CD4-positive, alpha-beta T cell (primary cell): ENCODE measurements at regions of chr22 and their contacts with region 1.

Region 1: DNA sequence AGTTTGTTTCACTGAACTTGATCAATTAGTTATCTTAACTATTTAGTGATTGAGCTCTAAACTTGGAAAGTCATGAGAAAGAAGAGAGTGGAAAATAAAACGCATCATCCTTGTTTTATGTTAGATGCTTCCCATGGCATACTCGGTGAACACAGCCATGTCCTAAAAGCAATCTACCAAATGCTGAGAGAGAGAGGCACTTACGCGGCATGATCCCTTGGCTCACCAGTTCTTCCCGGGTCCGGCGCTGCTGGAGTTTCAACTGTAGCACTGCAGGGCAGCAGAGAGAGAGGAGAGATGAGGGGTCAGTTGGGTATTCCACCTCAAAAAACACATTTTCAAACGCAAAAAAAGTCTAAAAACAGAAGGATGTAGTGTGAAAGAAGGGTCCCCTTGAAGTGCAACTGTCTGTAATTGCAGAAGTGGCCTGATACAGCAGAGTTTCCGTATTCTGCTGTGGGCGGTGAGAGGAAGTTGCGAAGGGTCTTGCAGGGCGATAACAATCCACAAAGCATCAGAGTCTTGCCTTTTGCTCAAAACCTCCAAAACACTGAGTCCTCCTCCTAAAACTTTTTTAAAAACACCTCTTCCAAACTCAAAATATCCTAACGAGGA is 92.7 kb downstream of the SGSM3 start:
- DNase-seq: peak; percentile 10 to 73 (median 44)
- ATAC-seq: peak; percentile 81
- H3K4me3 ChIP-seq: peak overlapping the region; percentile 79
- H3K4me3 Mint-ChIP-seq: peak overlapping the region; percentile 96
- H3K27ac ChIP-seq: peak overlapping the region; percentile 76 to 78
- H3K27ac Mint-ChIP-seq: peak overlapping the region; percentile 98
- H3K4me1 ChIP-seq: peaks cover 49% of the 10 kb centered on the region
- H3K4me1 Mint-ChIP-seq: peaks cover 87% of the 10 kb centered on the region
- H3K27me3 ChIP-seq: no peaks in the 10 kb centered on the region
- H3K27me3 Mint-ChIP-seq: no peaks in the 10 kb centered on the region
- CTCF ChIP-seq: no peak

Region 2: GRCh38 chr22:39360674-39361413 is 1102.3 kb before region 1 on chr22:
- CTCF ChIA-PET with region 1: no interaction called
- POLR2A ChIA-PET with region 1: no interaction called
- intact Hi-C with region 1: no loop called
- DNase-seq: no peak
- ATAC-seq: no peak
- H3K4me3 ChIP-seq: no peak overlapping the region
- H3K4me3 Mint-ChIP-seq: no peak overlapping the region
- H3K27ac ChIP-seq: no peak overlapping the region
- H3K27ac Mint-ChIP-seq: no peak overlapping the region
- H3K4me1 ChIP-seq: no peaks in the 10 kb centered on the region
- H3K4me1 Mint-ChIP-seq: no peaks in the 10 kb centered on the region
- H3K27me3 ChIP-seq: no peaks in the 10 kb centered on the region
- H3K27me3 Mint-ChIP-seq: no peaks in the 10 kb centered on the region
- CTCF ChIP-seq: no peak

Region 3: DNA sequence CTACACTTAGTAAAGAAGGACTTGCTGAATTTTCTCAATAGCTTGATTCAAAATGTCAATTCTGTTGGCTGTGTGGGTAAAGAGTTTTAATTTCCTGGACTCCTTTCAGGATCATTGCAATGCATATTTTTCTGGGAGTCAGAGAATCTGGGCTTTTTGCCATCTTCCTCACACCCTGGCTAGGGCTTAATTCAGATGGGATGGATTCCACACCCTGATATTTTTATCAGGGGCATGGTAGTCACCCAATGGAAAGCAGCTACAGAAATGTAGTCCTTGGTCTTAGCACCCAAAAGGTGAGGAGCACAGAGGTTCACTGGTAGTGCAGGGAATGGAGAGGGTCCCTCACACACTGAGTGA is 13.5 kb before region 1 on chr22:
- CTCF ChIA-PET with region 1: interaction called, 4 read pairs
- POLR2A ChIA-PET with region 1: interaction called, 57 read pairs
- intact Hi-C with region 1: no loop called
- DNase-seq: no peak
- ATAC-seq: no peak
- H3K4me3 ChIP-seq: no peak overlapping the region
- H3K4me3 Mint-ChIP-seq: peak overlapping the region; percentile 63
- H3K27ac ChIP-seq: peak overlapping the region in 1 of 2 donors; percentile 33
- H3K27ac Mint-ChIP-seq: peak overlapping the region; percentile 83
- H3K4me1 ChIP-seq: peaks cover 61% of the 10 kb centered on the region
- H3K4me1 Mint-ChIP-seq: peaks cover 89% of the 10 kb centered on the region
- H3K27me3 ChIP-seq: no peaks in the 10 kb centered on the region
- H3K27me3 Mint-ChIP-seq: no peaks in the 10 kb centered on the region
- CTCF ChIP-seq: no peak

Region 4: DNA sequence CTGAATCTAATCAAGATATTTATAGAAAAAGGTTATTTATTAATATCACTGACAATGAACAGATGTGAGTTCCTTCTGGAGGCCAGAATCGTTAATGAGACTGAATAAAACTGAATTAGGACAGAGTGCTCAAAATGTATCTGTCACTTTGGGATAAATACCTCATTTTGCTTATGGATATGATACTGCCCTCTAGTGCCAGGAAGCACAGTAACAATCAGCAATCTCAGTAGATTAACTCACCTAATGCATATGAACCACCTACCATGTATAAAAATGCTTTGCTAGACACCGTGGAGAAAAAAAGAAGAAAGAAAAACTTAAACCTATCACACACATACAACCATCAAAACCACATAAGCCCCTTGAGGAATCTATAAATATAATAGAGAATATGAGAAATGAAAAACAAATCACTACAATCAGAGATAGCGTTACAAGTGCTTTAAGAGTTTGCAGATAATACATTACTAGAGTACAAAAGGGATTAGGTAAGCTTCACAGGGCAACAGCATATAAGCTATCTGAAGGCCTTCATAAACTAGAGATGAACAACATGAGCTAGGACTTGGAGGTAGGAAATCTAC is 24.6 kb after region 1 on chr22:
- CTCF ChIA-PET with region 1: interaction called, 3 read pairs
- POLR2A ChIA-PET with region 1: interaction called, 3 read pairs
- intact Hi-C with region 1: loop called in 1 of 2 experiments (anchors 2 kb)
- DNase-seq: peak in 3 of 14 experiments; percentile 51 to 68 (median 62)
- ATAC-seq: peak; percentile 53
- H3K4me3 ChIP-seq: no peak overlapping the region
- H3K4me3 Mint-ChIP-seq: no peak overlapping the region
- H3K27ac ChIP-seq: no peak overlapping the region
- H3K27ac Mint-ChIP-seq: peak overlapping the region; percentile 4
- H3K4me1 ChIP-seq: peaks cover 5% of the 10 kb centered on the region
- H3K4me1 Mint-ChIP-seq: peaks cover 52% of the 10 kb centered on the region
- H3K27me3 ChIP-seq: no peaks in the 10 kb centered on the region
- H3K27me3 Mint-ChIP-seq: no peaks in the 10 kb centered on the region
- CTCF ChIP-seq: peak; percentile 91

Region 5: GRCh38 chr22:40533712-40534378 is 70.7 kb after region 1 on chr22:
- CTCF ChIA-PET with region 1: no interaction called
- POLR2A ChIA-PET with region 1: interaction called, 10 read pairs
- intact Hi-C with region 1: no loop called
- DNase-seq: peak; percentile 21 to 90 (median 47)
- ATAC-seq: peak; percentile 98
- H3K4me3 ChIP-seq: peak overlapping the region; percentile 54
- H3K4me3 Mint-ChIP-seq: peak overlapping the region; percentile 84
- H3K27ac ChIP-seq: peak overlapping the region; percentile 44 to 49
- H3K27ac Mint-ChIP-seq: peak overlapping the region; percentile 88
- H3K4me1 ChIP-seq: peaks cover 31% of the 10 kb centered on the region
- H3K4me1 Mint-ChIP-seq: peaks cover 71% of the 10 kb centered on the region
- H3K27me3 ChIP-seq: no peaks in the 10 kb centered on the region
- H3K27me3 Mint-ChIP-seq: no peaks in the 10 kb centered on the region
- CTCF ChIP-seq: no peak

Region 6: DNA sequence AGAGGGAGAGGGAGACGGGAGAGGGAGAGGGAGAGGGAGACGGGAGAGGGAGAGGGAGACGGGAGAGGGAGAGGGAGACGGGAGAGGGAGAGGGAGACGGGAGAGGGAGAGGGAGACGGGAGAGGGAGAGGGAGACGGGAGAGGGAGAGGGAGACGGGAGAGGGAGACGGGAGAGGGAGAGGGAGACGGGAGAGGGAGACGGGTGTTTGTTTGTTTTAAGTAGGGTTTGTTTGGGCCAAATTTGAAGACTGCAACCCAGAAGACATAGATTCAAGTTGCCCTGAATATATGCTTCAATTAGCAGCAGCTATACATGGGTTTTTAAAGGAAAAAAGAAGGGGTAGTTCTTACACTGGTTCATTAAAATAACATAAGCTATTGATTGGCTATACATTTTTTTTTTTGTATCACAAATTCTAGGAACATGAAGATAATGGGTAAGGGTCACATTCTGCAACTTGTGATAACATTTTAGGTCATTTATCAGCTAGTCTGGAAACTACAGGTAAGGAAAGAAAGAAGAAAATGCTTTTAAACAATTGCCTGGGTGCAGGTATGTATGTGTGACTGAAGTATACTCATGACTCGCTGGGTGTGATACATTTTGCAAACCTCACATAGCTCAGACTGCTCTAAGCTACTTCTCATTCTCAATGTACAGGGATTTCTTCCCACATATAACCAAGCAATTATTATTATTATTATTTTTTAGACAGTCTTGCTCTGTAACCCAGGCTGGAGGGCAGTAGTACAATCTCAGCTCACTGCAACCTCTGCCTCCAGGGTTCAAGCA is 283.5 kb after region 1 on chr22:
- CTCF ChIA-PET with region 1: no interaction called
- POLR2A ChIA-PET with region 1: no interaction called
- intact Hi-C with region 1: no loop called
- DNase-seq: no peak
- ATAC-seq: no peak
- H3K4me3 ChIP-seq: no peak overlapping the region
- H3K4me3 Mint-ChIP-seq: no peak overlapping the region
- H3K27ac ChIP-seq: no peak overlapping the region
- H3K27ac Mint-ChIP-seq: no peak overlapping the region
- H3K4me1 ChIP-seq: no peaks in the 10 kb centered on the region
- H3K4me1 Mint-ChIP-seq: peaks cover 5% of the 10 kb centered on the region
- H3K27me3 ChIP-seq: no peaks in the 10 kb centered on the region
- H3K27me3 Mint-ChIP-seq: no peaks in the 10 kb centered on the region
- CTCF ChIP-seq: no peak